ENCODE measurements at regions of chr12 and their contacts with region 1.

Region 1: GRCh38 chr12:92145731-92146496 is at the start of gene BTG1:
- DNase-seq: peak; percentile 99
- H3K4me3 Mint-ChIP-seq: peak within 1 kb of the TSS; percentile 99
- H3K27ac Mint-ChIP-seq: peak within 1 kb of the TSS; percentile 99
- H3K4me1 Mint-ChIP-seq: peaks cover 23% of the 10 kb centered on the region
- H3K27me3 Mint-ChIP-seq: no peaks in the 10 kb centered on the region
- total RNA-seq, gene BTG1: 102 to 133 TPM

Region 2: DNA sequence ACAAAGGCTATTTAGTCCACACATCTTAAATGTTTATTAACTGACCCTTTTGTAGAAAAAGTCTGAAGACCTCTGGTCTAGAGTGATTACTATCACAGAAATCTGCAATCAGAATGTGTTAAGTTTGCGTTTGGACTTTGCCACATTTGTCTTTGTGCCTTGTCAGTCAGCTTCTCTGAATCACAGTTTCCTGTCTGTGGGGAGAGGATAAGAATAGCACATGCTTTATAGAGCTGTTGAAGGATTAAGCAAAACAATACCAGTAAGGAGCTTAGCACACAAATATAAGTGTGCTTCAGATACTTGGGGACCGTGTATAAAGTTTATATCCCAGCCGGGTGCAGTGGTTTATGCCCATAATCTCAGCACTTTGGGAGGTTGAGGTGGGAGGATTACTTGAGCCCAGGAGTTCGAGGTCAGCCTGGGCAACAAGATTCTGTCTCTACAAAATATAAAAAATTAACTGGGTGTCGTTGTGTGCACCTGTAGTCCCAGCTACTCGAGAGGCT is 62.8 kb after region 1 on chr12:
- CTCF ChIA-PET with region 1: interaction called, 4 read pairs
- POLR2A ChIA-PET with region 1: interaction called, 19 read pairs
- DNase-seq: peak; percentile 55
- H3K4me3 Mint-ChIP-seq: peak overlapping the region; percentile 60
- H3K27ac Mint-ChIP-seq: peak overlapping the region; percentile 88
- H3K4me1 Mint-ChIP-seq: peaks cover 45% of the 10 kb centered on the region
- H3K27me3 Mint-ChIP-seq: no peaks in the 10 kb centered on the region

Region 3: DNA sequence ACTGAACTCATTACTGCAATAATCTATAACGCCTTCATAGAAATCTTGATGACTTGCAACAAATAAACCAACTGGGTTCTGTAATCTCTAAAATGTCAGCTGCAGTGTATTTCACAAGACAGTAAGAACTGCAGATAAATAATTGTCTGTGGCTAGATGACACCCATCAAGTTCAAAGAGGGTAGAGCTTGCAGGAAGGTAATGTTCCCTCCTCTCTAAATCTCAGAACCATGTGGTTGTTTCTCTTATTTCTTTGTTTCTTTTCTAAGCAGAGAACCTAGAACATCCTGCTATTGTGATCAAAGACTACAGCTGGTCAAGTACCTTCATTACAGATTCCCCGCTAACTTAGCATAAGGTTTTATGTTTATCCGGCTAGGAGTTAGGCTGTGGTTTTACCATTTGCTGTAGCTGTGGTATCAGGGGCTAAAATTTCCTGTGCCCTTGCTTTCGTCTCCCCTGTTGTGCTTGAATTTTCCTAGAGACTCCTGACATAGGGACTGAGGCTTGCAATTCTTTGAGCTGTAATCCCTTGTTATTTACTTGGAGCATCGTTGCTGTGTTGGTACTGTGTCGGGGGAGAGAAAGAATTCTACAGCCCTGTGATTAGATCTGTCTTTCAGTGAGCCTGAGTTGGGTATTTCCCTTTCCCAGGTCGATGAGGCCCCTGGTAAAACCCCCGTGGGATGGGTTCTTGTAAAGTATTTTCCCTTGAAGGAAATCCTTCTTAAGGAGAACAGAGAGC is 252.8 kb after region 1 on chr12:
- CTCF ChIA-PET with region 1: interaction called, 21 read pairs
- POLR2A ChIA-PET with region 1: interaction called, 16 read pairs
- DNase-seq: peak; percentile 51
- H3K4me3 Mint-ChIP-seq: peak overlapping the region; percentile 33
- H3K27ac Mint-ChIP-seq: peak overlapping the region; percentile 95
- H3K4me1 Mint-ChIP-seq: peaks cover 99% of the 10 kb centered on the region
- H3K27me3 Mint-ChIP-seq: no peaks in the 10 kb centered on the region

Region 4: DNA sequence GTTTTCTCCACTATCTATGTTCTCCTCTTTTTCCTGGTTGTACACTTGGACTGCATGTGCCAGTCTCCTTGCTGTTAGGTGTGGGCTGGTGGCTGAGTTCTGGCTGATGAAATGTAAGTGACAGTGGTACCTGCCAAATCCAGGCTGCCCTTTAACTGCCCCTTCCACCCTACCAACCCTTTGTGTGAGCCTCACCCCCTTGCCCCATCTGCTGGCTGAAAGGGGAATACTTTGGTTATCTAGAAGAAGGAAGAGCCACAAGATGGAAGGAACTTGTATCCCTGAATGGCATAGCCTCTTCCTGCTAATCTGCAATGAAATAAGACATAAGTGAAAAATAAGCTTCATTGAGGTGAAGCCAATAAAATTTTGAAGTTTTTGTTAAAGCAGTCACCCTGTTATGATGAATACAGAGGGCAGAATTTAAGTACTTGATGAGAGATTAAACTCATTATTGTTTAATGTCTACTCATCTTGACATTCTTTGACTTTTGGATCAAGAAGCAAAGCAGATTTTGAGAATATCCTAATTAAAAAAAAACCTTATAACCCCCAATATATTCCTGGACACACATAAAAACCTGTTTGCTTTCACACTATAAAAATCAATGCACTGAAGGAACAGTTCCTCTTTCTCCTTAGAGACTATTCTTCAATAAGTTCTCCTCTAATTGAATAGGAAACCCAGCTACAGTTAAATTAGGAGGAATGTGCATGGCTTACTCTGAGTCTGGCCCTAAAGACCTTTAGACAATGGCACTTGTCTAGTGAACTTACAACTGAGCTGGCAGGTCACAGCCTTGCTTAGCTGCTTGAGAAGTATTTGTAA is 262.4 kb after region 1 on chr12:
- CTCF ChIA-PET with region 1: interaction called, 21 read pairs
- POLR2A ChIA-PET with region 1: interaction called, 12 read pairs
- DNase-seq: peak; percentile 59
- H3K4me3 Mint-ChIP-seq: no peak overlapping the region
- H3K27ac Mint-ChIP-seq: no peak overlapping the region
- H3K4me1 Mint-ChIP-seq: peaks cover 43% of the 10 kb centered on the region
- H3K27me3 Mint-ChIP-seq: no peaks in the 10 kb centered on the region

Measured in activated CD4-positive, alpha-beta T cell treated with anti-CD3 and anti-CD28 coated beads, Interleukin-2, amount 10 ng/mL, durations not matched to agents 7 days and 5 days (primary cell).